ENCODE measurements at regions of chr13 and their contacts with region 1.

Region 1: GRCh38 chr13:41456768-41457588 is at the start of gene RGCC:
- DNase-seq: peak; percentile 46 to 72 (median 55)
- H3K4me3 ChIP-seq: peak within 1 kb of the TSS in 2 of 4 donors; percentile 43 to 62
- H3K27ac ChIP-seq: peak within 1 kb of the TSS in 3 of 5 donors; percentile 14 to 42 (median 36)
- H3K4me1 ChIP-seq: peaks cover 11 to 21% of the 10 kb centered on the region in 2 donors
- H3K27me3 ChIP-seq: no peaks in the 10 kb centered on the region
- CTCF ChIP-seq: no peak
- POLR2A ChIP-seq: peak; percentile 36 to 41
- total RNA-seq, gene RGCC: 6.2 to 151 (median 28.9) TPM

Region 2: GRCh38 chr13:41145146-41145908 is 311.7 kb before region 1 on chr13:
- intact Hi-C with region 1: no loop called
- DNase-seq: no peak
- H3K4me3 ChIP-seq: no peak overlapping the region
- H3K27ac ChIP-seq: no peak overlapping the region
- H3K4me1 ChIP-seq: no peaks in the 10 kb centered on the region
- H3K27me3 ChIP-seq: no peaks in the 10 kb centered on the region
- CTCF ChIP-seq: no peak
- POLR2A ChIP-seq: no peak

Region 3: DNA sequence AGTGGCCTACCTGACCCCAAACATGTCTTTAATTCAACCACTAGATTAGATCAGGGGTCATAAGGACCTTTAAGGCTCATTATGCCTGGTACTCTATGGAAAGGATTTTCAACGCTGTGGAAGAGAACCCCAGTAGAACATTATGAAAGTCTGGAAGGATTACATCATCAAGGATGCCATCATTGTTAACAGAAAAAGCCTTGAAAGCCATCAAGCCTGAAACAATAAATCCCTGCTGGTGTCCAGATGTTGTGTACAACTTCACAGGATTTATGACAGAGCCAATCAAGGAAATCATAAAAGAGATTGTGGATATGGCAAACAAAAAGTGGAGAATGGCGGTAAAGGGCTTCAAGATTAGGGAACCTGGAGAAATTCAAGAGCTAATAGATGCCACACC is 86.2 kb before region 1 on chr13:
- intact Hi-C with region 1: no loop called
- DNase-seq: no peak
- H3K4me3 ChIP-seq: no peak overlapping the region
- H3K27ac ChIP-seq: no peak overlapping the region
- H3K4me1 ChIP-seq: no peaks in the 10 kb centered on the region
- H3K27me3 ChIP-seq: no peaks in the 10 kb centered on the region
- CTCF ChIP-seq: no peak
- POLR2A ChIP-seq: no peak

Region 4: GRCh38 chr13:41652727-41653361 is 195.9 kb after region 1 on chr13:
- intact Hi-C with region 1: loop called in 1 of 2 experiments (anchors 5 kb)
- DNase-seq: peak in 5 of 7 donors; percentile 30 to 57 (median 39)
- H3K4me3 ChIP-seq: no peak overlapping the region
- H3K27ac ChIP-seq: no peak overlapping the region
- H3K4me1 ChIP-seq: peaks cover 0 to 8% of the 10 kb centered on the region in 2 donors
- H3K27me3 ChIP-seq: no peaks in the 10 kb centered on the region
- CTCF ChIP-seq: peak; percentile 38 to 81 (median 73)
- POLR2A ChIP-seq: no peak

Region 5: GRCh38 chr13:41788552-41788951 is 331.6 kb after region 1 on chr13:
- intact Hi-C with region 1: loop called in 1 of 2 experiments (anchors 5 kb)
- DNase-seq: no peak
- H3K4me3 ChIP-seq: no peak overlapping the region
- H3K27ac ChIP-seq: peak overlapping the region in 1 of 5 donors; percentile 9
- H3K4me1 ChIP-seq: no peaks in the 10 kb centered on the region
- H3K27me3 ChIP-seq: no peaks in the 10 kb centered on the region
- CTCF ChIP-seq: no peak
- POLR2A ChIP-seq: no peak

Measured in adrenal gland (tissue), 19 donors.